ENCODE measurements at regions of chr5 and their contacts with region 1.

Region 1: DNA sequence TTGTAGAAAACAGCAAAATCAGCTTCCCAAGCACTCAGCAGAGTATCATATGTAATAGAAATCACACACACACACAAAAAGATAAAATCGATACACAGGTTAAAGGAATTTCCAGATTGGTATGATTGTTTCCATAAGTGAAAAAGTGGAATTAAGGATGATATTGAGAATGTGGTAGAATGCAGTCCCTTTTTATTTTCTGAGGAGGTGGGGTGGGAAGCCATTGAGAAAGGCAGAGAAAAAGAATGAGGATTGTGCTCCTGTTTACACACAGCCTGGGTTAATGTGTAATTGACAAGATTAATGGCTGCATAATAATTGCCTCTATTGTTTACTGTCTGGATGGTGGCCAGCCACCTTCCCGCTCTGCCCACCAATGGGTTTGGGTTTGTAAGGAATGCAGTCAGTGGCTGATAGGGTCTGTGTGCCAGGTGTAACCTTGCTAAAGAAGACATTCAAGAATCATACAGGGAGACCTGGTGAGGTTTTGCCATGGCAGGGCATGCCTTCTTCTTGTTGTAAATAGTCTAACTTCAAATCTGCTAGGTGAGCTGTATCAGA is 177.2 kb upstream of the MAP3K1 start:
- DNase-seq: peak; percentile 81 to 90
- H3K4me3 ChIP-seq: no peak overlapping the region
- H3K4me3 Mint-ChIP-seq: peak overlapping the region; percentile 55
- H3K27ac Mint-ChIP-seq: peak overlapping the region; percentile 90
- H3K4me1 ChIP-seq: peaks cover 84% of the 10 kb centered on the region
- H3K4me1 Mint-ChIP-seq: peaks cover 61% of the 10 kb centered on the region
- H3K27me3 ChIP-seq: no peaks in the 10 kb centered on the region
- H3K27me3 Mint-ChIP-seq: no peaks in the 10 kb centered on the region
- CTCF ChIP-seq: no peak

Region 2: DNA sequence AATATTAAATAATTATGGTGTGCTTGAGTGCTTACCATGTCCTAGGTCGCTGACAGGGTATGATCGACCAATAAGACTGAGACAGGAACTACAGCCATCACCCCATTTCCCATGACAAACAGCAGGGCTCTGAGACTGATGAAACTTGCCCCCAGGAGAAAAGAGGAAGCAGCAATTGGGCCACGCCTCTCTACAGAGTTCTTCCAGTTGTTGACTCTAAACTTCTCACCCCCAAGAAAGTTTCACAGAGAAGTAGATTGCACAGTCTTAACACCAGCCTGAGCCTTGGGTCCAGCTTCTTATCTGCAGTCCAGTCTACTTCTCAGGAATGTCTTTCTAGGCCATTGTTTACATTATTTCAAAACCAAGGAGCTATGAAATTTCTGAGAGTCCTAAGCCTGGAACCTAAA is 222.8 kb before region 1 on chr5:
- CTCF ChIA-PET with region 1: interaction called, 4 read pairs
- POLR2A ChIA-PET with region 1: no interaction called
- intact Hi-C with region 1: loop called (anchors 2 kb)
- DNase-seq: peak; percentile 82 to 90
- H3K4me3 ChIP-seq: no peak overlapping the region
- H3K4me3 Mint-ChIP-seq: peak overlapping the region; percentile 64
- H3K27ac Mint-ChIP-seq: peak overlapping the region; percentile 95
- H3K4me1 ChIP-seq: peaks cover 73% of the 10 kb centered on the region
- H3K4me1 Mint-ChIP-seq: peaks cover 45% of the 10 kb centered on the region
- H3K27me3 ChIP-seq: no peaks in the 10 kb centered on the region
- H3K27me3 Mint-ChIP-seq: no peaks in the 10 kb centered on the region
- CTCF ChIP-seq: no peak

Region 3: DNA sequence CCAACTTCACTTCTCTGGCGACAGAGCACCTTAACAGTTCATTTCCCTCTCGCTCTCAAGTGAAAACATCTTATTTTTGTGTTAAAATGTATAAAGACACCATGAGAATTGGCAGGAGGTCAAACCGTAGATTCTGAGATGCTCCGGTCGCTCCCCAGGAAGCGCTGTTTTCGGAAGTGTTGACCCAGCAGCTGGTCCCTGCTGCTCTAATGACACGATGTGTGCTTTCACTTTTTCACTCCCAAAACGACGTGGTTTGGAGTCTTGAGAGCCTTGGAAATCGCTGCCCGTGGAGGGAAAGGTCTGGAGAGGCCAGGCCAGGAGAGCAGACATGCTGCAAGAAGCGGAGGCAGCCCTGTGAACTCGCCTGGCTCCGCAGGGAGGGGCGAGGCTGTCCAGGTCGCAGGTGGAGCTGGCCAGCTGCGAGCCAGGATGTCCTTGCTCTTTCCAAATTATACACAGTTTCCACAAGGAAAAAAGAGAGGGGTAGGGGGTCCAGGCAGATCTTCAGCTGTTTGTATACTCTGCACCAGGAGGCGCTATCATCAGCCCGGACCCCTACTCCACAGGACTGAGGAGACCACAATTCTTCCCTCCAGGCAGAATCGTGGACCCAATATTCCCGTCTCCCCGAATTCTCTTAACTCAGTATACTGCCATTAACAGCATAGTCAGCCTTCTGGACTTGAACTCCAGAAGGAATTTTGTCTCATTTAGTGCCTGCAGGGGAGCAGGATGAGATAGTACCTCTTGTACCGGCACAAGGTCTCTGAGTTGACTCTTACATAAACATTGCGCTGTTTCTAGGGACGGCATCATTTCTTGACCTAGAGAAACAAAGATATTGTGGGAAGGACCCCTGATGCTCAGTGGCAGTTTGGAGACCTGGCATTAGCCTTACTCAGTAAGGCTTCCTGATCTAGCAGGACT is 156.4 kb before region 1 on chr5:
- CTCF ChIA-PET with region 1: no interaction called
- POLR2A ChIA-PET with region 1: interaction called, 3 read pairs
- intact Hi-C with region 1: loop called (anchors 2 kb)
- DNase-seq: peak; percentile 62 to 66
- H3K4me3 ChIP-seq: peak overlapping the region; percentile 56
- H3K4me3 Mint-ChIP-seq: peak overlapping the region; percentile 69
- H3K27ac Mint-ChIP-seq: peak overlapping the region; percentile 71
- H3K4me1 ChIP-seq: peaks cover 40% of the 10 kb centered on the region
- H3K4me1 Mint-ChIP-seq: peaks cover 24% of the 10 kb centered on the region
- H3K27me3 ChIP-seq: no peaks in the 10 kb centered on the region
- H3K27me3 Mint-ChIP-seq: no peaks in the 10 kb centered on the region
- CTCF ChIP-seq: peak in 1 of 2 experiments; percentile 55

Region 4: GRCh38 chr5:56535347-56535746 is 102.8 kb before region 1 on chr5:
- CTCF ChIA-PET with region 1: no interaction called
- POLR2A ChIA-PET with region 1: interaction called, 3 read pairs
- intact Hi-C with region 1: loop called (anchors 1 kb)
- DNase-seq: peak in 1 of 2 experiments; percentile 45
- H3K4me3 ChIP-seq: no peak overlapping the region
- H3K4me3 Mint-ChIP-seq: no peak overlapping the region
- H3K27ac Mint-ChIP-seq: peak overlapping the region; percentile 79
- H3K4me1 ChIP-seq: peaks cover 57% of the 10 kb centered on the region
- H3K4me1 Mint-ChIP-seq: peaks cover 27% of the 10 kb centered on the region
- H3K27me3 ChIP-seq: no peaks in the 10 kb centered on the region
- H3K27me3 Mint-ChIP-seq: no peaks in the 10 kb centered on the region
- CTCF ChIP-seq: no peak

Region 5: DNA sequence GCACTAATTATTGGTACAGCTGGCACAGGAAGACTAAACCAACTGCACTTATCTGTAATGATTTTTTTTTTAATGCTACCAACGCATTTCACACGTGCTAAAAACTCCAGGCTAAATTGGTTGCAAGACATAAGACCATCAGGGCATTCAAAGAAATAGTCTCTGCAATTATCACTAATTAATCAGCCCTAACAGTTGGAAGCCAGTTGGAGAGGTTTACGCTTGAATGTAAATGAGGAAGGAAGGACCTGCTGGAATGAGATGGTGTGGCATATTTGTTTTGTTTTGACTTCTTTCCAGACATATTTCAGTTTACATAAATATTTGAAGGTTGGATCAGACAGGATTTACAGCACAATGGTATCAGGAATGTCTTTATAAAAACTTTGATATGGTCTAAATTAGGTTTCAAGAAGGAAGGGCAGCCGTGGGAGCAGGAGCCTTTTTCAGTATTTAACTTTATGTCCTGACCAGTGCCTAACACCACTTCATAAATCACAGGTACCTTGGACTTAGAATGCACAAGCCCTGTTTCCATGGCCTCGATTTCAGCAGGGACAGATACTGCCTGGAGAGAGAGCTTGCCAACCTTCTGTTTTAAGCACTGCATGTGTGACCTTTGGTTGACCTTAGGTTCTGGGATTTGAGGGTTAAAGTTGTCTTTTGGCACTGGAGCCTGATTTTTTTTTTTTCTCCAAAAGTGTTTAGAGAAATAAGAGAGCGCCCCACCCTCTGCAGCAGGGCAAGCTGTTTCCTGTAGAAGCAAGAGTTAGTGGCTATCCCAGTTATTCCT is 22.6 kb before region 1 on chr5:
- CTCF ChIA-PET with region 1: no interaction called
- POLR2A ChIA-PET with region 1: no interaction called
- intact Hi-C with region 1: no loop called
- DNase-seq: no peak
- H3K4me3 ChIP-seq: no peak overlapping the region
- H3K4me3 Mint-ChIP-seq: no peak overlapping the region
- H3K27ac Mint-ChIP-seq: no peak overlapping the region
- H3K4me1 ChIP-seq: no peaks in the 10 kb centered on the region; the same call in 1 of the 2 replicates
- H3K4me1 Mint-ChIP-seq: peaks cover 7% of the 10 kb centered on the region
- H3K27me3 ChIP-seq: no peaks in the 10 kb centered on the region
- H3K27me3 Mint-ChIP-seq: no peaks in the 10 kb centered on the region
- CTCF ChIP-seq: no peak

Region 6: GRCh38 chr5:56833325-56833724 is 195.2 kb after region 1 on chr5:
- CTCF ChIA-PET with region 1: no interaction called
- POLR2A ChIA-PET with region 1: no interaction called
- intact Hi-C with region 1: loop called (anchors 5 kb)
- DNase-seq: peak; percentile 25 to 55
- H3K4me3 ChIP-seq: no peak overlapping the region
- H3K4me3 Mint-ChIP-seq: no peak overlapping the region
- H3K27ac Mint-ChIP-seq: peak overlapping the region; percentile 28
- H3K4me1 ChIP-seq: peaks cover 65% of the 10 kb centered on the region
- H3K4me1 Mint-ChIP-seq: peaks cover 61% of the 10 kb centered on the region
- H3K27me3 ChIP-seq: no peaks in the 10 kb centered on the region
- H3K27me3 Mint-ChIP-seq: no peaks in the 10 kb centered on the region
- CTCF ChIP-seq: no peak